K562 (cell line): ENCODE measurements at regions of chr6 and their contacts with region 1.

Region 1: GRCh38 chr6:18595774-18596530 is 208.8 kb downstream of the RNF144B start:
- DNase-seq: peak; percentile 64 to 76 (median 72)
- ATAC-seq: peak; percentile 98
- H3K4me3 ChIP-seq: no peak overlapping the region
- H3K27ac ChIP-seq: no peak overlapping the region
- H3K4me1 ChIP-seq: no peaks in the 10 kb centered on the region
- H3K27me3 ChIP-seq: no peaks in the 10 kb centered on the region
- CTCF ChIP-seq: peak; percentile 77 to 93 (median 92)
- EP300 ChIP-seq: no peak
- POLR2A ChIP-seq: no peak
- RAD21 ChIP-seq: peak; percentile 86 to 91

Region 2: DNA sequence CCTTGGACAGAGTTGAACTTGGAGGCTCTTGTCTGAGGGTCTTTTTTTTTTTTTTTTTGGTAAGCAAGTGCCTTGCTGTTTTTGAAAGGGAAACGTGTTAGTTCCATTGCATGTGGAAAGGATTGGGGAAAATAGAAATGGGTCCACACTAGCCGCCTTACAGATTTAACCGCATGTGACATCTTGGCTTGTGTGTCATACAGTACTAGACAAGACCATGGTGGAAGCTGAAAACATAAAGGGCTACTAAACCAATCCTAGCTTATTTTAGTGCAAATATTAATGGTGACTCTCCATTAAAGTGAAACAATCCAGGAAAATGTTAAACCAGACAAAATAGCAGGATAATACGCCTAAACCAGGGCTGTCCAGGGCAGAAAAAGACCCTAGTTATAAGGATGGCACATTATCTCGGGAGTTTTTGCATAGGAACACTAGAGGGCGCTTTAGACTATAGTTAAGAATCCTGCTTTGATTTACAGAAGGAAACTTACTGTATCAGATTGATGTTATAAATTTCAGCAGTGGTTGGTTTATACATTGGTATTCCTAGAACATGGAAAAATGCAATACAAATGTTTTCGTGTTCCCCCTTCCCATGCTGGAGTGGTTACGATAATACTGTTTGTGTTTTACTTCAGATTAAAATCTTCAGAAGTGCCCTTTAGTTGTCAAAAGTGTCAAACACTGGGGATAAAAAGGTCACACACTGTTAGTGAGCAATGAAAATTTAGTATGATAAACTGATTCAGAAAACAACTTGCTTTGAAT is 271.8 kb before region 1 on chr6:
- CTCF ChIA-PET with region 1: no interaction called
- POLR2A ChIA-PET with region 1: no interaction called
- in situ Hi-C with region 1: no loop called
- intact Hi-C with region 1: loop called (anchors 10 kb)
- DNase-seq: peak; percentile 42 to 60 (median 56)
- ATAC-seq: peak; percentile 82
- H3K4me3 ChIP-seq: no peak overlapping the region
- H3K27ac ChIP-seq: no peak overlapping the region
- H3K4me1 ChIP-seq: no peaks in the 10 kb centered on the region
- H3K27me3 ChIP-seq: peaks cover 5 to 10% of the 10 kb centered on the region in 2 experiments; a peak in 2 of 5 replicates
- CTCF ChIP-seq: peak; percentile 60 to 85 (median 79); a peak in 5 of 6 replicates
- EP300 ChIP-seq: no peak
- POLR2A ChIP-seq: no peak
- RAD21 ChIP-seq: peak; percentile 79 to 87

Region 3: GRCh38 chr6:18823782-18824386 is 227.9 kb after region 1 on chr6:
- CTCF ChIA-PET with region 1: no interaction called
- POLR2A ChIA-PET with region 1: no interaction called
- in situ Hi-C with region 1: no loop called
- intact Hi-C with region 1: loop called (anchors 2 kb)
- DNase-seq: peak; percentile 37 to 84 (median 59)
- ATAC-seq: peak; percentile 74
- H3K4me3 ChIP-seq: no peak overlapping the region
- H3K27ac ChIP-seq: no peak overlapping the region
- H3K4me1 ChIP-seq: no peaks in the 10 kb centered on the region
- H3K27me3 ChIP-seq: no peaks in the 10 kb centered on the region
- CTCF ChIP-seq: peak; percentile 68 to 76 (median 73)
- EP300 ChIP-seq: no peak
- POLR2A ChIP-seq: no peak
- RAD21 ChIP-seq: peak; percentile 42 to 72

Region 4: DNA sequence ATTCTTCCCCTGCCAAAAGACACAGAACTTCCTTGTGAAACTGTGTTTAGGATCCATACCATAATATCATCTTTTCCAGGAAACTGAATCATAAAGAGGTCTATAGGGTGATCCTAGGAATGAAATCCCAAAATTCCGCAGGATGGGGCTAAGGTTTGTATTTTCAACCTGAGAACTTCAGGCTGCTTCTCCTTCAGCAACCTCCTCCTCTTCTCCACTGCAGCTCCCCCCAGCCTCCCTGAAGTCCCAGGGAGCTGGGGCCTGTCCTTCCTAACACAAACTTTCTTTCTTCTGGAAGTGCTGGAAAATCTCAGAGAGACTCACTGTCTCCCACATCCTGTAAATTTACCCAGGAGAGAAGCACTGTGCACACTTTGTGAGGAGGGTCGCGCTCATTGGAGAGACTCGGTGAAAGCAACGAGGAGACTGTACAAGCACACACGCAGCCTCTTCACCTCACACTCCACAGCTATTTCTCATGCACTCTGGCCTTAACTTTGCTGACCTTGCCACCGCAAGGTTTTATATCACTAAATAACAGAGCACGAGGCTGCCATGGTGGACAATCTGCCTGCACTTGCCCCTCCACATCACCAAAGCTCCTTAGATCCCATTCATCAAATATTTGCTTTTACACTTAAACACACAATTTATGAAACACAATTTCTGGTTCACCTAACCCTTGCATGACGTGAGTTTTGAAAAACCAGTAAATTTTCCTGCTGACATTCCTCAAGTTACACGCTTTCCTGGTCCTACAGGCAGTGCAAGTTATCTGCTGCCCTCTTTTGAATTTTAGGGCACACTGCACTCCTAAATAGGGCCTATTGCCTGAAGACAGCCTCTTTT is 1255.5 kb after region 1 on chr6:
- CTCF ChIA-PET with region 1: no interaction called
- POLR2A ChIA-PET with region 1: no interaction called
- in situ Hi-C with region 1: loop called (anchors 25 kb)
- intact Hi-C with region 1: loop called (anchors 1 kb)
- DNase-seq: peak in 2 of 4 experiments; percentile 45 to 67
- ATAC-seq: peak; percentile 95
- H3K4me3 ChIP-seq: no peak overlapping the region
- H3K27ac ChIP-seq: no peak overlapping the region
- H3K4me1 ChIP-seq: no peaks in the 10 kb centered on the region; a peak in 1 of 5 replicates
- H3K27me3 ChIP-seq: peaks cover 7 to 16% of the 10 kb centered on the region in 2 experiments; a peak in 3 of 5 replicates
- CTCF ChIP-seq: peak; percentile 63 to 89 (median 79)
- EP300 ChIP-seq: no peak
- POLR2A ChIP-seq: no peak
- RAD21 ChIP-seq: peak; percentile 72 to 86